Right ventricle myocardium superior (tissue), 1 donor: ENCODE measurements at regions of chrX and their contacts with region 1.

Region 1: DNA sequence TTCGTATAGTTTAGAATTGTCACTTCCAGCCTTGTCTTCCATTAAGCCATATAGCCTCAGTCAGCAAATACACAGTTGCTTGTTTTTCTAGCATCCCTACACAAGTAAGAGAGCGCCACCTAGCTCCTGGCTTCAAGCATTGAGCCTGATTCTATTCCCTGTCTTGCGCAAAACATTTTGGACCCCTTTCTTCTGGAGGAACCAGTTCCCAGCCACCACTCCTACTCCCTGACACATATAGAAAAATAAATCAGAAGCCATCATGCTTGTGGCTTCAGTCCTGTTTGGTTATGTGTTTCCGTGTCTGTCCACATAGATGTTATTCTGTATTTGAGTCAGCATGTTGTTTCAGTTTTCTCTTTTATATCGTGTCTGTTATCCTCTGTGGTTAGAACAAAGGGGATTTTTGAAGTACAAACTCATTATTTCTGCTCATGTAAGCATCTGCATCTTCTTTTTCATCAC is 59.9 kb downstream of the GK start:
- DNase-seq: peak; percentile 49
- ATAC-seq: peak; percentile 52

Region 2: DNA sequence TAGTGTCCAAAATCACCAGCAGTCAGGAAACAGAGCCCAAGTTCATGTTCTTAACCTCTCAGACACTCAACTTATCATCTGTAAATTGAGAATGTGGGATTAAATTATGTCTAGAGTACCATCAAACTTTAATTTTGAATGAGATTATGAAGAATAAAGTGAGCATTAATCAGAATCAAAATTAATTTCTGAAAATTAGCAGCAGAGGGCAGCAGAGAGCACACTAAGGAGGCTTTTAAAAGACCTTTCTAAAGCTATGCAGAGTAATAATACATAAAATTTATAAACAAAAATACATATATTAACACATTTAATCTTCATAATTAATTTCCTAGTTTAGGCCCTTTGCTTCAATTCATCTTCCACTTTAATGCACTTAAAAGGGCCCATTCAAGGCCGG is 142.6 kb before region 1 on chrX:
- intact Hi-C with region 1: loop called (anchors 10 kb)
- DNase-seq: no peak
- ATAC-seq: no peak

Region 3: DNA sequence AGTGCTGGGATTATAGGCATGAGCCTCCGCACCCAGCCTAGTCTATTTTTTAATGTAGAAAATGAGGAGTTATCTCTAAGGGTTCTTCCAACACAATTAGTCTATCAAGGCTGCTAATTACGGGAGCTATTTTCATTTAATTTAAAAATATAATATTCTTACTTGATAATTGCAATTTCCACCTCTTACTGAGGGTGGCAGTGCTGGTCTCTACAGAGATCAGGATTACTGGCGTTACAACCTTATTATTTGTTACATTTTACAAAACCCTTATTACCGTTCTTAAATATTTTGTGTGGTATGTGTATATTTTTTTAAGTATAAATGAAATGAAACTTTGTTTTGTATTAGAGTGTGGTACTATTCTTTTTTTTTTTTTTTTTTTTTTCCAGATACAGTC is 77.5 kb before region 1 on chrX:
- intact Hi-C with region 1: loop called (anchors 10 kb)
- DNase-seq: no peak
- ATAC-seq: no peak

Region 4: DNA sequence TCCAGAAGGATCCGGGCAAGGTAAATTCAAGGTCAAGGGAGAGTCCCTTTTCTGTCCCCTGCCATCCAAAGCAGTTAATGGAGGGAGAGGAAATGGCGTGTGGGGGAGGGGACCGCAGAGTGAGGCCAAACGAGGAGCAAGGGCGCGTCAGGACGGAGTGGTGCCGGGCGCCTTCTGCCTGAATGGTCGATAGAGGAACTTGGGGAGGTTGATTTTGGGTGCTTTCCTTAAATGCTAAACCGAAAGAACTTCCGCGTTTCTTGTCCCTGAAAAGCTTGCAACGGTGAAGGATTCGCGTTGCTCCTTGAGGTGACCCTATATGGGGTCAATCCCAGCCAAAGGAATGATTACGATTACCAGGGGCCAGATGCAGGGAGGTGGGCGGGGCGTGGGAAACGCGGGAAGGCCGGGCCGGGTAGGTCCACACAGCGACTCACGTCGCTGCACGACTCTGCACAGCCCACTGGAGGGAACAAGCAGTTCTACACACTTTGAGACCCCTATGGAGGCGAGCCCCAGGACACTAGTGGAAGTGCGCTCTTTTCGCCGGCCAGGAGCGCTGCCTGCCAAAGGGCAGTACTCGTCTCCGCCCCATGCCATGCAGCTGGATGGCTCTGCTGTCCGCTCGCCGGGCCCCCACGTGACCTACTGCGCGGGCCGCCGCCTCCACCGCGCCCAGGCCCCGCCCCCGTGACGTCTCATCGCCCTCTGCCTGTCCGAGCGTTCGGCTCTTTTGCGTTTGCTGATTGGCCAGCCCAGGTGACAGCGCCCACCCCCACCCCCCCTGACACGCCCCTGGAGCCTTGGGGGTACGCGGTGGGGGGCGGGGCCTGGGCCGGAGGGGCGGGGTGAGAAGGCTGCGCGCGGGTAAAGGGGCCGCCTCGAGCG is 60.3 kb before region 1 on chrX:
- intact Hi-C with region 1: no loop called
- DNase-seq: peak; percentile 96
- ATAC-seq: peak; percentile 97